Activated CD8-positive, alpha-beta T cell treated with anti-CD3 and anti-CD28 coated beads, Interleukin-2, amount 10 ng/mL, durations not matched to agents 7 days and 5 days (primary cell): ENCODE measurements at regions of chr5 and their contacts with region 1.

Region 1: DNA sequence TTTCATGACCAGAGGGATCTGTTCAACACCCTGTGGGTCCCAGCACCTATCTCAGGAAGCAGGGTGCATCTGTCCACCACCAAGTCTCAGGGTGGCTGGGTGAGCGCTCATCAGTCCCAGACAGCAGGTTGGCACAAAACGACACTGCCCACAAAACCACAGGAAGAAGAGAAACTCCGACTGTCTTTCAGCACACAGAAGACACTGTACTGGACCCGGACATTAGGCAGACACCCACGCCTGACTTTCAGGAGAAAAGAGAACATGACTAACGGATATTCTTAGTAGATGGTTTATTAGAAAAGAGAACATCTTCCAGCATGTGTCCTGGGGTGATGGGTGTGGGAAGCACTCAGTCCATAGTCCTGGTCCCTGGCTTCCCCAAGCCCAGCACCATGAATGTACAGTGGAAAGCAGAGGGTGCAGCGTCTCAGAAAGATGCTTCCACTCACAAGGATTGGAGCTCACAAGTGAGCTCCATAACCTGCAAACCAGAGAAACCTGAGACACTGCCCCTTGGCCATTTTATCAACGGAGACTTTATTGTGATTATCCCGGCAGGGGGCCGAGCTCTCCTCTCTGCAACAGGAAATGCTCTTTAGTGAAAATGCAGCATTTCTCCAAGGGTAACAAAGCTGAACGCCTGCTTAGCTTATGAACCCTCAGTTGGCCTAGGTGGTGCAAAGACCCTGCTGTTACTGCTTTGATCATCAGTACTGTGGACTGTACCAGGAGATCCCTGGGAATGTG is 35.8 kb upstream of the LCP2 start:
- DNase-seq: peak; percentile 79
- ATAC-seq: peak; percentile 43
- H3K4me3 Mint-ChIP-seq: no peak overlapping the region
- H3K27ac Mint-ChIP-seq: no peak overlapping the region
- H3K4me1 Mint-ChIP-seq: peaks cover 30% of the 10 kb centered on the region
- H3K27me3 Mint-ChIP-seq: no peaks in the 10 kb centered on the region

Region 2: DNA sequence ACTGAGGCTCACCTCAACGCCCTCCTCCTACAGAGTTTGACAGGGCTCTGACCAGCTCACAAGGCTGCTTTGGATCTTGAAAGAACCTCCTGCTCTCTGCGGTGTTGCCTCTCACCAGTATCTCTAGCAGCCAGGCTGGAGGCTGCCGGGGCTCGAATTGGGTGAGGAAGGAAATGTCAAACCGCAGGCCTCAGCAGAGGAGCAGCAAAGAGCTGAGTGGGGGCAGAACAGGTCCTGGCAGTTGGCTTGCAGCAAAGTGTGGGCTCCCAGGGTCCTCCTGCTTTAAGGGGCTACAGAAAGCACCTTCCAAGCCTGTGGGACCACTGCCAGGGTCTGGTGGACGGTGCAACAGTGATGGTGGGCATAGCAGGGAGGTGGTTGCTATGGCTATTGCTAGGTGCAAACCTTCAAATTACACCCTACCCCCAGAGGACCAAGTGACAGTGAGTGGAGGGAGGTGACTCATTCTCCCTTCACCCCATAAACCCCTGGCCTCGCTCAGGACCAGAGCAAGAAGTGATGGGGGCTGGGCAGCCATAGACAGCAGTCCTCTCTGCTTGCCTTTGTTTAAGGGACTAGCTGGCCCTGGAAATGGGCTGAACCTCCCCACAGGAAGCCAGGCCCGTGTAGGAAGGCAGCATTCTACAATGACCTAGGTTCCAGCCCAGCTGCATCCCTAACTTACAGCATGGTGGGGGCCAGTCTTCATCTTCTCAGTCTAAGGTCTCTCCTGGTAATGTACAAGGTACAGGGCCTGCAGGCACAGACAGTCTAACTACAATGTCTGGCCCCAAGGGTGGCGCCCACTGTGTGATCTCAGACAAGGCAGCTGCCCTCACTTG is 54.5 kb before region 1 on chr5:
- CTCF ChIA-PET with region 1: interaction called, 208 read pairs
- POLR2A ChIA-PET with region 1: interaction called, 101 read pairs
- DNase-seq: peak; percentile 97
- ATAC-seq: peak; percentile 77
- H3K4me3 Mint-ChIP-seq: peak overlapping the region; percentile 72
- H3K27ac Mint-ChIP-seq: peak overlapping the region; percentile 94
- H3K4me1 Mint-ChIP-seq: peaks cover 94% of the 10 kb centered on the region
- H3K27me3 Mint-ChIP-seq: no peaks in the 10 kb centered on the region

Region 3: DNA sequence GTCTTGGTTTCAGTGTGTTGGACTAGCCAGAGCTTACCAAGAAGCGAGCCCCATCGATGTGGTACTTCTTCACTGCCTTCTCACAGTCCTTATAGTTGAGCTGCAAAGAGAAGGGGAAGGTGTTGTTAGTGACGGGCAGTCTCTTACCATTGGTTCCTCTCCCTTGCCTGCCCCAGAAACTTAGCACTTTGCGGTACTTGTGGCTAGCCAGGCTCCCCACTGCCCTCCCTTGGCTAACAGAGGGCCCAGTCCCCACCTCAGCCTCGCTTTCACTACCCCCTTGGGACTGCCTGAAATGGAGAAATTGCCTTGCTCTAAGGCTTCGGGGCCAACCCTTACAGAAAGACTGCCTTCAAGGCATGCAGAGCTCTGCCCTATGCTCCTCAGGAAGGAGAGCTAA is 40.1 kb before region 1 on chr5:
- CTCF ChIA-PET with region 1: interaction called, 226 read pairs
- POLR2A ChIA-PET with region 1: interaction called, 432 read pairs
- DNase-seq: peak; percentile 92
- ATAC-seq: peak; percentile 61
- H3K4me3 Mint-ChIP-seq: peak overlapping the region; percentile 96
- H3K27ac Mint-ChIP-seq: peak overlapping the region; percentile 93
- H3K4me1 Mint-ChIP-seq: peaks cover 64% of the 10 kb centered on the region
- H3K27me3 Mint-ChIP-seq: no peaks in the 10 kb centered on the region

Region 4: GRCh38 chr5:170312666-170313065 is 20.7 kb before region 1 on chr5:
- CTCF ChIA-PET with region 1: interaction called, 22 read pairs
- POLR2A ChIA-PET with region 1: interaction called, 31 read pairs
- DNase-seq: peak; percentile 55
- ATAC-seq: peak; percentile 81
- H3K4me3 Mint-ChIP-seq: peak overlapping the region; percentile 35
- H3K27ac Mint-ChIP-seq: peak overlapping the region; percentile 39
- H3K4me1 Mint-ChIP-seq: peaks cover 41% of the 10 kb centered on the region
- H3K27me3 Mint-ChIP-seq: no peaks in the 10 kb centered on the region